ENCODE measurements at regions of chr14 and their contacts with region 1.

Region 1: DNA sequence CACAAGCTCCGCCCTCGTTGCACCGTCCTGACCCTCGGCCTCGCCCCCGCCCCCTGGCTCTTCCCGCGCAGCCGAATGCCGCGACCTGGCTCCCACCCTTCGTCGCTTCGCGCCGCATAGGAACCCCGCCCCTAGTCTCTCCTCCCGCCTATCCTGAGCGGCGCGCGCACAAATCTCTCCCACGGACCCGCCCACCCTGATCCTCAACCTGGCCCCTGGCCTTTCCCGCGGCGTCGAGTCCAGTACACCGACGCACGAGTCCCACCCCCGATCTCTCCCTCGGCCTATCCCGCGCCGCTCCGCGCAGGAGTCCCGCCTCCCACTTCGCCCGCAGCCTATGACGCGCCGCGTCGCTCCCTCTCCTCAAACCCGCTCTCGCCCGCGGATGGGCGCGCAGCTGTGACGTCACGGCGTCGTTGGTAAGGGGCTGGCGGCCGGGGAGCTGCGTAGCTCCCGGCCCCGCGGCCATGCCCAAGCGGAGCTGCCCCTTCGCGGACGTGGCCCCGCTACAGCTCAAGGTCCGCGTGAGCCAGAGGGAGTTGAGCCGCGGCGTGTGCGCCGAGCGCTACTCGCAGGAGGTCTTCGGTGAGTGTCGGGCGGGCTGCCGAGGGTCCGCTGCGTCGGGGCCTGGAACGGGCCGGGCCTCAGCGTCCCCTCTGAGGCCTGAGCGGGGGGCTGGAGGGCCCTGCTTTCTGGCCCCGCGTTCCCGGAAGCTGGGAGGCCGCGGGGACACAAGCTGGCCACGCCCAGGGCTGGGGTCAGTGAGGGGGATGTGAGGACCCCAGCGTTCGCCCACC is at the start of gene SIVA1:
- DNase-seq: peak; percentile 98 to 100 (median 99)
- ATAC-seq: peak; percentile 88
- H3K4me3 ChIP-seq: peak within 1 kb of the TSS; percentile 87 to 99
- H3K4me3 Mint-ChIP-seq: peak within 1 kb of the TSS; percentile 87
- H3K27ac ChIP-seq: peak within 1 kb of the TSS; percentile 86 to 97
- H3K27ac Mint-ChIP-seq: peak within 1 kb of the TSS; percentile 94
- H3K4me1 ChIP-seq: peaks cover 50% of the 10 kb centered on the region
- H3K4me1 Mint-ChIP-seq: peaks cover 48% of the 10 kb centered on the region
- H3K27me3 ChIP-seq: no peaks in the 10 kb centered on the region
- H3K27me3 Mint-ChIP-seq: no peaks in the 10 kb centered on the region
- CTCF ChIP-seq: no peak
- total RNA-seq, gene SIVA1: 104 to 115 TPM

Region 2: DNA sequence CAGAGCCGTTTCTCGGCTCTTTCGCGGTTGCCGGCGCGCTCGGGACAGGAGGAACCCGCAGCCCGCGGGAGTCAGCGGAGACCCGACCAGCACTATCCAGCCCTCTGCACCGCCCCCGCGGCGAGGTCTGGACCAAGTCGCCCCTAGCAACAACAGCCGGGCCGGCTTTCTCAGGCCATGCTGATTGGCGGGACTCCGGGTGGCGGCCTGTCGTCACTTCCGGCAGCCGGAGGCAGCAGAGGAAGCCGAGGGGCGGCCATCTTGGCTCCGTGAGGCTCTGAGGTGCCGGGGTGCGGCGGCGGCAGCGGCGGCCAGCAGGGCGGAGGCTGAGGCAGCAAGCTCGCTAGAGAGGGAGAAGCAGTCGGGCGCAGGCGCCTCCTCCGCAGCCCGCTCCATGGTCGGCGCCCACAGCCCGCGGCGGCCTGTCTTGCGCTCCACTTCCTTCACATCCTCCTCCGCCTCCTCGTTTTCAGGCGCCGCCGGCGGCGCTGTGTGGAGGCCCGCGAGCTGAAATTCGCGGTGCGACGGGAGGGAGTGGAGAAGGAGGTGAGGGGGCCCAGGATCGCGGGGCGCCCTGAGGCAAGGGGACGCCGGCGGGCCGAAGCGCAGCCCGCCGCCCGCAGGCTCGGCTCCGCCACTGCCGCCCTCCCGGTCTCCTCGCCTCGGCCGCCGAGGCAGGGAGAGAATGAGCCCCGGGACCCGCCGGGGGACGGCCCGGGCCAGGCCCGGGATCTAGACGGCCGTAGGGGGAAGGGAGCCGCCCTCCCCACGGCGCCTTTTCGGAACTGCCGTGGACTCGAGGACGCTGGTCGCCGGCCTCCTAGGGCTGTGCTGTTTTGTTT is 1367.6 kb before region 1 on chr14 and contains the start of gene MARK3:
- CTCF ChIA-PET with region 1: no interaction called
- POLR2A ChIA-PET with region 1: no interaction called
- intact Hi-C with region 1: loop called in 1 of 2 experiments (anchors 5 kb)
- DNase-seq: peak; percentile 91 to 98 (median 96)
- ATAC-seq: peak; percentile 88
- H3K4me3 ChIP-seq: peak within 1 kb of the TSS; percentile 72 to 73
- H3K4me3 Mint-ChIP-seq: peak within 1 kb of the TSS; percentile 97
- H3K27ac ChIP-seq: peak within 1 kb of the TSS; percentile 76 to 92
- H3K27ac Mint-ChIP-seq: peak within 1 kb of the TSS; percentile 96
- H3K4me1 ChIP-seq: peaks cover 26% of the 10 kb centered on the region
- H3K4me1 Mint-ChIP-seq: peaks cover 33% of the 10 kb centered on the region
- H3K27me3 ChIP-seq: no peaks in the 10 kb centered on the region
- H3K27me3 Mint-ChIP-seq: no peaks in the 10 kb centered on the region
- CTCF ChIP-seq: peak; percentile 16
- total RNA-seq, gene MARK3: 123 to 124 TPM

Region 3: DNA sequence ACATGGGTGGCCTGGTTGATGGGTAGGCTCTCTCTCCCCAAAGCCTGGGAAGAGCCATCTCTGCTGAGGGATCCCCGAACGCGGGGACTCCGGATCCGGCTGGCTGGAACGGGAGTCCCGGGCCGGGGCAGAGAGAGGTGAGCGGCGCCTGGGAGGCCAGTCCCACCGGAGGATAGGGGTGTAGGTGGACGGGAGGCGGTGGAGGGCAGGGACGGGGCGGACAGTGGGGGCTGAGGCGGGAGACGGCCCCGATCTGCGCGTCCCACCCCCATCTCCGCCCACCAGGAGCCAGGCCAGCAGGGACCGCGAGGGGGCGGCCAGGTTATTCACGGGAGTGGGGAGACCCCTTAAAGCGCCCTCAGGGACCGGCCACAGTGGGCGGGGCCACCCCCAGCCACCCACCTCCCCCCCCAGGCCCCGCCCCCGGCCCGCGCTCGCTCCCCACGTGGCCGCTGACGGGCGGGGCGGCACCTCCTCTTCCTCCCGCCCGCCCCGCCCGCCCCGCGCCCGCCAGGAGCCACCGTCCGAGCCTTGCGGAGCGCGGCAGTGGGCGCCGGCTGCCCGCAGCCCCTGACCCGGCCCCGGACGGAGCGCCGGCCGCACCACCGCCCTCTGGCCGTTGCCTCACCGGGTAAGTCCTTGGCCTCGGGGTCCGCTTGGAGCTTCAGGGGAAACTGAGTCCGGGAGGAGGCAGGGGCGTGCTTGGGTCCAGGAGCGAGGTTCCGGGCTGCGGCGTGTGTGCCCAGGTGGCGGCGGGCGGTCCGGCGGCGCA is 63.6 kb before region 1 on chr14 and contains the start of gene INF2:
- CTCF ChIA-PET with region 1: no interaction called
- POLR2A ChIA-PET with region 1: no interaction called
- intact Hi-C with region 1: no loop called
- DNase-seq: peak in 8 of 9 experiments; percentile 27 to 72 (median 42)
- ATAC-seq: peak; percentile 65
- H3K4me3 ChIP-seq: peak within 1 kb of the TSS; percentile 39 to 78
- H3K4me3 Mint-ChIP-seq: peak within 1 kb of the TSS; percentile 80
- H3K27ac ChIP-seq: peak within 1 kb of the TSS; percentile 16 to 44
- H3K27ac Mint-ChIP-seq: no peak within 1 kb of the TSS
- H3K4me1 ChIP-seq: peaks cover 75% of the 10 kb centered on the region
- H3K4me1 Mint-ChIP-seq: peaks cover 50% of the 10 kb centered on the region
- H3K27me3 ChIP-seq: no peaks in the 10 kb centered on the region
- H3K27me3 Mint-ChIP-seq: no peaks in the 10 kb centered on the region
- CTCF ChIP-seq: no peak
- total RNA-seq, gene INF2: 42.2 to 49.1 TPM

Region 4: DNA sequence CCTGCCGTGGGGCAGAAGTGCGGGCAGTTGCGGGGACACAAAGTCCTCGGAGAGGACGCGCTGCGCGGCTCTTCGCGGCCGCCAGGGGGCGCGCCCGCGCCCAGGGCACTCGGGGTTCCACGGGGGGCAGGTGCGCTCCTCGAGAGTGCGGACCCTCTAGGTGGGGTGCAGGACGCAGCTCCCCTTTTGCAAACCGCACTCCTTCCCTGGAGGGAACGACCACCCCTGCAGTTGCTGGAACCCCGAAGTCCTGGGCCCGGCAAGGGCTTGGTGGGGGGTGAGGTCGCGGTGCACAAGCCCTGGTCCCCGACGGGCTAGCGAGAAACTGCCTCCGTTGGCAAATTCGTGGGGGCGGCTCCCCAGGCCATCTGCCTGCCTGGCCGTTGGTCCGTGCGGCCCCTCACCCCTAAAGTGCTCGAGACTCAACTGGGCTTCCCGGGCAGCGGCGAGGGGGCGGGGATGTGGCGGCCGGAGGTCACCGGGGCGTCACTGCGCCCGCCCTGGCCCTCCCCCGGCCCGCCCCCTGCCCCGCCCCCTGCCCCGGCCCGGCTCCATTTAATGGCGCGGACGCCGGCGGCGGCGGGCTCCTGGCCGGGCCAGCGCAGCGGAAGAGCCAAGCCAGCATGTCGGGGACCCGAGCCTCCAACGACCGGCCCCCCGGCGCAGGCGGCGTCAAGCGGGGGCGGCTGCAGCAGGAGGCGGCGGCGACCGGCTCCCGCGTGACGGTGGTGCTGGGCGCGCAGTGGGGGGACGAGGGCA is 29.1 kb before region 1 on chr14 and contains the start of gene ADSS1:
- CTCF ChIA-PET with region 1: interaction called, 10 read pairs
- POLR2A ChIA-PET with region 1: interaction called, 7 read pairs
- intact Hi-C with region 1: loop called (anchors 1 kb)
- DNase-seq: peak; percentile 33 to 77 (median 58)
- ATAC-seq: peak; percentile 79
- H3K4me3 ChIP-seq: peak within 1 kb of the TSS; percentile 72 to 87
- H3K4me3 Mint-ChIP-seq: peak within 1 kb of the TSS; percentile 69
- H3K27ac ChIP-seq: no peak within 1 kb of the TSS
- H3K27ac Mint-ChIP-seq: no peak within 1 kb of the TSS
- H3K4me1 ChIP-seq: peaks cover 6% of the 10 kb centered on the region
- H3K4me1 Mint-ChIP-seq: no peaks in the 10 kb centered on the region
- H3K27me3 ChIP-seq: no peaks in the 10 kb centered on the region
- H3K27me3 Mint-ChIP-seq: no peaks in the 10 kb centered on the region
- CTCF ChIP-seq: peak; percentile 86
- total RNA-seq, gene ADSS1: 2.4 to 3.5 TPM

Region 5: GRCh38 chr14:104800015-104800770 is 47.3 kb after region 1 on chr14:
- CTCF ChIA-PET with region 1: no interaction called
- POLR2A ChIA-PET with region 1: interaction called, 20 read pairs
- intact Hi-C with region 1: loop called (anchors 1 to 2 kb)
- DNase-seq: peak; percentile 44 to 93 (median 83)
- ATAC-seq: peak; percentile 67
- H3K4me3 ChIP-seq: peak overlapping the region; percentile 48 to 50
- H3K4me3 Mint-ChIP-seq: peak overlapping the region; percentile 79
- H3K27ac ChIP-seq: peak overlapping the region; percentile 40 to 91
- H3K27ac Mint-ChIP-seq: peak overlapping the region; percentile 74
- H3K4me1 ChIP-seq: peaks cover 30% of the 10 kb centered on the region
- H3K4me1 Mint-ChIP-seq: peaks cover 32% of the 10 kb centered on the region
- H3K27me3 ChIP-seq: no peaks in the 10 kb centered on the region
- H3K27me3 Mint-ChIP-seq: no peaks in the 10 kb centered on the region
- CTCF ChIP-seq: no peak

Region 6: GRCh38 chr14:104985675-104986525 is 233.0 kb after region 1 on chr14 and contains the start of gene CLBA1:
- CTCF ChIA-PET with region 1: no interaction called
- POLR2A ChIA-PET with region 1: interaction called, 5 read pairs
- intact Hi-C with region 1: loop called in 1 of 2 experiments (anchors 2 kb)
- DNase-seq: peak; percentile 75 to 97 (median 87)
- ATAC-seq: peak; percentile 94
- H3K4me3 ChIP-seq: peak within 1 kb of the TSS; percentile 54 to 60
- H3K4me3 Mint-ChIP-seq: peak within 1 kb of the TSS; percentile 78
- H3K27ac ChIP-seq: peak within 1 kb of the TSS; percentile 60 to 73
- H3K27ac Mint-ChIP-seq: peak within 1 kb of the TSS; percentile 57
- H3K4me1 ChIP-seq: peaks cover 8% of the 10 kb centered on the region
- H3K4me1 Mint-ChIP-seq: peaks cover 5% of the 10 kb centered on the region
- H3K27me3 ChIP-seq: no peaks in the 10 kb centered on the region
- H3K27me3 Mint-ChIP-seq: peaks cover 6% of the 10 kb centered on the region
- CTCF ChIP-seq: no peak
- total RNA-seq, gene CLBA1: 0.84 to 1.0 TPM